ENCODE measurements at regions of chr5 and their contacts with region 1.

Region 1: DNA sequence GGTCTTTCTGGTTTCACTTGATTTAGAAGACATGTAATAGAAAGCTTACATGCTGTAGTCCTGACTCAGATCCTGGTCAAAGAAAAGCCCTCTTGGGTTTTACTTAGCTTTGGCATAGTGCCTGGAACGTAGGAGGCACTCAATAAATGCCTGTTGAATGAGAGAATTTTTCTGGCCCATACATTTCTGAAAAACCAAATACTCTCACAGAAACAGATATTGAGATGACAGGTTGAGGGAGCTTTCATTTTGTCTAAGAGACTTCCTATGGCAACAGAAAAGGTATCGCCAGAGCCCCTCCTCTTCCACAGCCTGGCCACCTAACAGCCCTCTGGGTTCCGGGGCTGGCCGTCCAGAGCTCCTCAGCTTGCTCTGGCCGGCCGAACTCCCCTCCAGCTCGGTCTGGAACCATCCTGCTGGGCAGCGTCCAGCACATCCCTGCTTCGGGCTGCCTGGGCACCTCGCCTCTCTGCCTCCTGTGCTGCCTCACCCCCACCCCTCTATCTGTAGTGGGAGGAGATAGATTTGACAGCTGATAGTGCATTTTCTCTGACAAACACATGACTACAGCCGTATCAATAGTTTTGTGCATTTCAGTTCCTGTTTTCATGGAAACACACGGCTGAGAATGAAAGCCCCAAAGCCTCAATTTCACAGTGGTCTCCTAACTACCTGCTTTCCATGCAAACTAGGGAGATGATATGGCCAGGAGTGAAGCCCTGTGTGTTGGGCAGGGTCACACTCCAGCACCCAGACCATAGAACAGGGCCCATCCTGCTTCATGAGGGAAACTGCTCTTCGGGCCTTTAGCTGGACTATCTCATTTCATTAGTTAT is 1.1 kb downstream of the IL4 start:
- DNase-seq: peak; percentile 42 to 81
- H3K4me3 ChIP-seq: no peak overlapping the region
- H3K27ac ChIP-seq: no peak overlapping the region
- H3K4me1 ChIP-seq: peaks cover 11% of the 10 kb centered on the region
- H3K27me3 ChIP-seq: no peaks in the 10 kb centered on the region
- CTCF ChIP-seq: no peak

Region 2: DNA sequence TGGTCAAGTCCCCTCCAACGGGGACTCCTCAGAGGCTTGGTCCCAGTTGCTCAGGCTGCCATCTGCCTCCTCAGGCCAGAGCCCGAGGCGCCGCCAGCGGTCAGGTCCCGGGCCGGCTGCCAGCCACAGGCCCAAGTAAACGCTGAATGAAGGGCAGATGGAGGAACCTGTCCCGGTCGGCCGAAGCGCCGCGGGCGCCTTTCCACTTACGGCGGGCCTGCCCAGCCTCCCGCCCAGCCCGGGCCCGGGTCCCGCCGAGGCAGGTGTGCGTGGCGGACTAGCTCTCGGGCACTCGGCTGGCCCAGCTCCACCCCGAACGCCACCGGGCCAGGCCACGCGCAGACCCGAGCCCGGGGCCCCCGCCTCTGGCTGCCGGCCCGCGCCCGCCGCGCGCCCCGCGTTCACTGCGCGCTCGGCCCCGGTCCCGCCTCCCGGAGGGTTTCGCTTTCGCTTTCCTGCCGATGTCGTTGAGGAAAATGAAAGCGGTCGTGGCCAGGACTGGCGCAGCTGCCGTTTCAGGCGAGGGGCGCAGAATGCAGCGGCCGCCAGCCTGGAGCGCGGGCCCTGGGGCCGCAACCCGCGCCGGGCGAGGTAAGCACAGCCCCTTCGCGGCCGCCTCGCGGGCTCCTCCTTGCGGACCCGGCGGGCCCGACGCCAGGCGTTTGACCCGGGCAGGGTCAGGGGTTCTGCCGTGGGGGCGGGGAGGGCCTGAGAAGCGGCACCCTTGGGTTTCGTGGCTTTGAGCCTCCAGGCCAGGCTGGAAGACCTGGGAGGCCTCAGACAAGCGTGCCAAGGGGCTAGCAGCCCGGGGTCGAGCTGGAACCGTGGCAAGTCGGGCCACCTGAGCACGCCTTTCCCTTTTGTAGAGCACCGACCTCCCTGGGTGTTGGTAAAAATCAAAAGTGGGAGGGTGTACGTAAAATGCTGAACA is 264.2 kb before region 1 on chr5:
- CTCF ChIA-PET with region 1: no interaction called
- POLR2A ChIA-PET with region 1: no interaction called
- intact Hi-C with region 1: loop called (anchors 10 kb)
- DNase-seq: peak; percentile 64 to 80
- H3K4me3 ChIP-seq: peak overlapping the region; percentile 79
- H3K27ac ChIP-seq: peak overlapping the region; percentile 92
- H3K4me1 ChIP-seq: peaks cover 59% of the 10 kb centered on the region
- H3K27me3 ChIP-seq: no peaks in the 10 kb centered on the region
- CTCF ChIP-seq: peak; percentile 73

Region 3: GRCh38 chr5:132718544-132719312 is 43.8 kb after region 1 on chr5:
- CTCF ChIA-PET with region 1: no interaction called
- POLR2A ChIA-PET with region 1: no interaction called
- intact Hi-C with region 1: no loop called
- DNase-seq: no peak
- H3K4me3 ChIP-seq: no peak overlapping the region
- H3K27ac ChIP-seq: no peak overlapping the region
- H3K4me1 ChIP-seq: no peaks in the 10 kb centered on the region
- H3K27me3 ChIP-seq: no peaks in the 10 kb centered on the region
- CTCF ChIP-seq: no peak

Region 4: DNA sequence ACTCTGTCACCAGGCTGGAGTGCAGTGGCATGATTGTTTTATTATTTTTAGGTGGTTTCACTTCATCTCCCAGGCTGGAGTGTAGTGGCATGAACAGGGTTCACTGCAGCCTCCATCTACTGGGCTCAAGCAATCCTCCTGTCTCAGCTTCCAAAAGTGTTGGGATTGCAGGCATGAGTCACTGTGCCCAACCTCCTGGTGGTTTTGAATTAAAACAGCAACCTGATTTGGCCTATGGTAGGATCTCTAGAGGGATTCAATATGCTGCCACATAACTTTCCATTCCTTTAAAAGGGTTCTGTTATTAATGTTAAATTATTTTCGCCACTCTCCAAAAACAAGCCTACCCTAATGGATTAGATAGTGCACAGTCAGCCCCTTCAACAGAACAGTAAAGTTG is 367.0 kb after region 1 on chr5:
- CTCF ChIA-PET with region 1: interaction called, 11 read pairs
- POLR2A ChIA-PET with region 1: no interaction called
- intact Hi-C with region 1: no loop called
- DNase-seq: no peak
- H3K4me3 ChIP-seq: no peak overlapping the region
- H3K27ac ChIP-seq: no peak overlapping the region
- H3K4me1 ChIP-seq: no peaks in the 10 kb centered on the region
- H3K27me3 ChIP-seq: no peaks in the 10 kb centered on the region
- CTCF ChIP-seq: no peak